ENCODE measurements at regions of chr3 and their contacts with region 1.

Region 1: DNA sequence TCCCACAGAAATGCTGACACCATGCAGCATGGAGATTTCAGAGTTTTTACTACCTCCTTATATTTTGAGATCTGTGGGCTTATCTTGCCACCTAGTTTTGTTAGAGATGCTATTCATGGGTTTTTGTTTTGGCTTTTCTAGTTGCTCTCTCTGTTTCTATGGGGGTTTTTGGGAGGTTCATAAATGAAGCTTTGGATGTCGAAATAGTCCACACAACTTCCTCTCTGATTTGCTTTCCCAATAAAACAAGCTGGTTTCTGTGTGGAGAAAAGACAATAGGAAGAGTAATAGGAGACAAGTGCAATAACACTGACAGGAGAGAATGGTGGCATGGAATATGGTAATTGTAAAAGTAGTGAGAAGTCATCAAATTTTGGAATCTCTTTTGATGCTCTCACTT is 106.8 kb upstream of the GPR149 start:
- DNase-seq: no peak
- H3K4me3 ChIP-seq: no peak overlapping the region
- H3K27ac ChIP-seq: no peak overlapping the region
- H3K4me1 ChIP-seq: no peaks in the 10 kb centered on the region
- CTCF ChIP-seq: no peak

Region 2: DNA sequence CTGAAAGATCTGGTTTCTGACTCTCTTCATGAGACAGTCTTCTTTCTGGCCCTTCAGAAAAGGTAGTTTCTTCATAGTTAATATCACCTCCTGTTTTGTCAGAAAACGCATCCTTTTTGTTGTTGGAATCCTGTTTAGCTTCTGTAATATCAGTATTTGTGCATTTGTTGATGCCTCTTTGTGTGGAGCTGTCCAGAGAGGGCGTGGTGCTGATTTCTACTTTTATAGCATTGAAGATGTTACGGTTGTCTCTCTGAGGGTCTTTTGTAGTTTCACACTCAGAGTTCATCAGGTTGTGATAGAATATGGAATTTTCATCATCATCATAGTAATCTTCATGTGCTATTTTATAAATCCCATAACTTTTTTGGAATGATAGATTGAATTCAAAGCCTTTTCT is 115.7 kb before region 1 on chr3:
- CTCF ChIA-PET with region 1: no interaction called
- POLR2A ChIA-PET with region 1: no interaction called
- intact Hi-C with region 1: no loop called
- DNase-seq: peak; percentile 2
- H3K4me3 ChIP-seq: no peak overlapping the region
- H3K27ac ChIP-seq: no peak overlapping the region
- H3K4me1 ChIP-seq: no peaks in the 10 kb centered on the region
- CTCF ChIP-seq: no peak

Region 3: GRCh38 chr3:154642145-154642544 is 105.4 kb after region 1 on chr3:
- CTCF ChIA-PET with region 1: no interaction called
- POLR2A ChIA-PET with region 1: interaction called, 11 read pairs
- intact Hi-C with region 1: no loop called
- DNase-seq: no peak
- H3K4me3 ChIP-seq: no peak overlapping the region
- H3K27ac ChIP-seq: no peak overlapping the region
- H3K4me1 ChIP-seq: no peaks in the 10 kb centered on the region
- CTCF ChIP-seq: no peak

Region 4: GRCh38 chr3:154971771-154972326 is 435.1 kb after region 1 on chr3:
- CTCF ChIA-PET with region 1: no interaction called
- POLR2A ChIA-PET with region 1: no interaction called
- intact Hi-C with region 1: no loop called
- DNase-seq: no peak
- H3K4me3 ChIP-seq: no peak overlapping the region
- H3K27ac ChIP-seq: no peak overlapping the region
- H3K4me1 ChIP-seq: no peaks in the 10 kb centered on the region
- CTCF ChIP-seq: no peak

Region 5: DNA sequence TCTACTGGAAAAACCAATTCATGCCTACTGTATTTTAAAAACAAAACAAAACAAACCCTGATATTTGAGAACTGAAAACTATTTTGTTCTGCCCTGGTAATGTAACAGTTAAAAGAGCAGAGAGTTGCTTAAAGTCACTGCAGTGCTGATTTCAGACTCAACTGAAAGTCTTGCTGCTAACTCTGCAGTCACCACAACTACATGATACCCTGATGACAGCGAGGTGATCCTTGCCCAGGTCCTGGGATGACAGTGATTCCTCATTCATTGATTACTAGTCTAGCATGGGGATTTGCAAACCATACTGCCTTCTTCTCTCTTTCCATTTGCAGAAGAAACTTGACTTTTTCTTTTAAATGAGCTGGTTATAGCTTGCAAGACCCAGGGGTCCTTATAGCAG is 610.8 kb after region 1 on chr3:
- CTCF ChIA-PET with region 1: no interaction called
- POLR2A ChIA-PET with region 1: no interaction called
- intact Hi-C with region 1: no loop called
- DNase-seq: no peak
- H3K4me3 ChIP-seq: no peak overlapping the region
- H3K27ac ChIP-seq: no peak overlapping the region
- H3K4me1 ChIP-seq: no peaks in the 10 kb centered on the region
- CTCF ChIP-seq: no peak